ENCODE measurements at regions of chr7 and their contacts with region 1.

Region 1: GRCh38 chr7:130350945-130351793 is 6.6 kb downstream of the CPA5 start:
- DNase-seq: no peak
- ATAC-seq: no peak
- H3K4me3 Mint-ChIP-seq: no peak overlapping the region
- H3K27ac Mint-ChIP-seq: no peak overlapping the region
- H3K4me1 Mint-ChIP-seq: no peaks in the 10 kb centered on the region
- H3K27me3 Mint-ChIP-seq: peaks cover 7% of the 10 kb centered on the region
- CTCF ChIP-seq: no peak

Region 2: DNA sequence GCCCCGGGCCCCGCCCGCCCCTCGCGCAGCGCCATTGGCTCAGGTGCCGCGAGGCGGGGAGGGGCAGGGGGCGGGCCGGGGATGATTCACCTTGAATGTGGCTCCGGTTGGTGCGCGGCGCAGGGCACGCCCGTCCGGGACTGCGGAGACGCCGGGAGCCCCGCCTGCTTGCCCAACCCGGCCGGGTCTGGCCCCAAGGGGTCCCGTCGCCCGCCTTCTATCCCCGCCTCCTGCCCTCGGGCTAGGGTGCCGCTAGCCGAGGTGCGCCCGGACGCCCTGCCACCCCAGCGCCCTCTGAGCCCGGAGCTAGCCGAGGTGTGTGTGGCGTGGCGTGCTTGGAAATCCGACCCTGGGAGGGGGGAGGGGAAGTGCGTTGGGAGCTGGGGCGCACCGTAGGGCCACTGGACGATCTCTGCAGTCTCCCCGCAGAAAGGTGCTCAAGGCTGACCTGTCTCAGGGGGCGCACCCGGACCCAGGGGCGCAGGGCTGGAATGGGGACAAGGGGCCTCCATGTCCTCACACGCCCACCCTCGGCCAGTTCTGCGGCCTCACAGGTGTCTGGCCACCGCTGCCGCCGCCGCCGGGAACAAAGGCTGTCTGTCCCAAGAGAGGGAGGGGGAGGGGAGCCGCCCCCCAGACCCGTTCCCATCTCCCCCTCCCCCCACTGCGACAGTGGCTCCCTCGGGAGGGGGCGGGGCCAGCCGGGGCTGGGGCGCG is 570.8 kb before region 1 on chr7:
- CTCF ChIA-PET with region 1: no interaction called
- POLR2A ChIA-PET with region 1: no interaction called
- intact Hi-C with region 1: no loop called
- DNase-seq: peak; percentile 62
- ATAC-seq: peak; percentile 79
- H3K4me3 Mint-ChIP-seq: peak overlapping the region; percentile 71
- H3K27ac Mint-ChIP-seq: no peak overlapping the region
- H3K4me1 Mint-ChIP-seq: peaks cover 38% of the 10 kb centered on the region
- H3K27me3 Mint-ChIP-seq: peaks cover 41% of the 10 kb centered on the region
- CTCF ChIP-seq: no peak

Region 3: DNA sequence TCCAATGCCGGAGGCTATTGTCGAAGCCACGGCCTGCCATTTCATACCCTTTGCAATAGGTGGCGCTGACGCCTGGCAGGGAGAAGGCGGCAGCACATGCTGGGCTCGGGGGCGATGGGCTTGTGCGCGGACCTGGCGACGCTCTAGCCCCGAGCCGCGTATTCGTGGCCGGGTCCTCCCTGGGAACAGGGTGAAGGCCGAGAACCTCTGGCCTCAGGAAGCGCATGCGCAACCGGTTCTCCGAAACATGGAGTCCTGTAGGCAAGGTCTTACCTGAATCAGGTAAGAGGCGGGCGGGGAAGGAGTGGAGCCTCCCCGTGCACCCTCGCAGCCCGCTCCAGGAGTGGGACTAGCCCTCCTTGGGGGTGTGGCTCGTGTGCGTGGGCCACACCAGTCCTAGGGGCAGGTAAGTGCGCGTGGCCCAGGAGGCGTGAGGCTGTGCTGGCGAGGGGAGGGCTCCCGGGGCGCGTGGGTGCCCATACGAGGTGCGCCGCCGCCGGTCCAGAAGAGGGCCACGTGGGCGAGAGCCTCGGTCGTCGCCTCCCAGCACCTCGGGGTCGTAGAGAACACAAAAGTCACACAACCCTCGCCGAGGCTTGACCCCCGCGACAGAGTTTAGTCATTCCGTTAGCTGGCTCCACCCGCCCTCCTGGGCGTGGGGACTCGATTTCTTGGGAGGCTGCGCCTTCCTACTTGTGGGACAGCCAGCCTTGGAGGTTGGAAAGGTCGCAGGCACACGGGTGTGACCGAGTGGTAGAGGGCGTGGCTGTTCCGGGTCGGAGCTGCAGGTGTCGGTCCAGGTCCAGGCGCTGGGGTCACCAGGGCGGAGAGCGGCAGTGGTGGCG is 135.2 kb after region 1 on chr7:
- CTCF ChIA-PET with region 1: no interaction called
- POLR2A ChIA-PET with region 1: no interaction called
- intact Hi-C with region 1: loop called (anchors 1 kb)
- DNase-seq: peak; percentile 50
- ATAC-seq: peak; percentile 87
- H3K4me3 Mint-ChIP-seq: peak overlapping the region; percentile 87
- H3K27ac Mint-ChIP-seq: peak overlapping the region; percentile 33
- H3K4me1 Mint-ChIP-seq: peaks cover 23% of the 10 kb centered on the region
- H3K27me3 Mint-ChIP-seq: peaks cover 32% of the 10 kb centered on the region
- CTCF ChIP-seq: peak; percentile 60

Region 4: DNA sequence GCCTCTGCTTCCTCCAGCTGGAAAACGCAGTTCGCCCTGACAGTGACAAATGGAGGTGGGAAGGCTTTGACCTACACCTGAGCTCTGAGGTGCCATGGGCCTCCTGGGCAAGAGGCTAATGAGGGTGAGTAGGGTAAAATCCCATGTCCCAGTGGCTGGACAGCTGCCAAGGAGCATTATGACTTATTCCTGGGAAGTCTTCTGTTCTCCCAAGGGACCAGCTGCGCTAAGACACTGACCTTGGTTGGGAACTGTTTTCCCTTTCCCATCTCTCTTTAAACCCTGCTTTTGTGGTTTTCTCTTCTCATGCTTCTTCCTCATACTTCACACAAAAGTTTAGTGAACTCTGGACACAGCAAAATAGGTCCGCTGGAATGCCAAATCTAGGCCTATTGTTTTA is 244.8 kb after region 1 on chr7:
- CTCF ChIA-PET with region 1: no interaction called
- POLR2A ChIA-PET with region 1: no interaction called
- intact Hi-C with region 1: no loop called
- DNase-seq: no peak
- ATAC-seq: no peak
- H3K4me3 Mint-ChIP-seq: no peak overlapping the region
- H3K27ac Mint-ChIP-seq: no peak overlapping the region
- H3K4me1 Mint-ChIP-seq: no peaks in the 10 kb centered on the region
- H3K27me3 Mint-ChIP-seq: no peaks in the 10 kb centered on the region
- CTCF ChIP-seq: no peak